ENCODE measurements at regions of chr2 and their contacts with region 1.

Region 1: DNA sequence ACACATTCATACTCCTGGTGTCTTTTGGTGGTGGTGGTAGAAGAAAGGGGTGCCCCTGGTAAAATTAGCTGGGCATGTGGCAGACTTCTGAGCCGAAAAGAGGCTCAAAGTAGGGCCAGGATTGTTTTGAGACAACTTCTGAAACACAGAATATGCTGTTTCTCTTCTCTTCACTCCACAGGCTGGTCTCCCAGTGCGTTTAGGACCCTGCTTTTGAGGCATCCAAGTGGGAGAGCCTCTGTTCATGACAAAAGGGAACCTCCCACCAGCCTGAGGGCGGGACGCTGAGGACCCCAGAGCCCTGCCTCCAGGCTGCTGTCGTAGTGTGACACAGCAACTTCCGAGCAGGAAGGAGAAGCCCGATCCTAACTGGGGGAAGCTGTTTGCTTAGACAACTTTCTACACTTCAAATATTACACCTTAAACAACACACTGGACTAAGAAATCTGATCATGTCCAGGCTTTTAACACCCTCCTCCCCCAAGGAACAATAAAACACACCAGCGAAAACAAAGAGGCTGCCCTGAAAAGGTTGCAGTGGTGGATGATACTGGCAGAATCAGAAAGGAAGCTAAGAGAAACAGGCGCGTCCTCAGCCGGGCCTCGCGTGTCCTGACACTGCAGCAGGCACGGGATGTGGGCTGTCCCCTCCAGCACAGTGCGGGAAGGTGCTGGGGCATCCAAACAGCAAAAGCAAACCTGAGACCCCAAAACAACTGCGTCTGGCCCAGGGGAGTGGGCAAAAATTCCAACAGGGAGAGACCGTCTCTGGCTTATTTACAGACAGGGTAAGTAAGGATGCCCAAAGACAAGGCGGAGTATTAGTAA is 9.3 kb downstream of the SERTAD2 start:
- DNase-seq: peak; percentile 72
- ATAC-seq: peak; percentile 73
- H3K4me3 Mint-ChIP-seq: peak overlapping the region; percentile 74
- H3K27ac Mint-ChIP-seq: peak overlapping the region; percentile 94
- H3K4me1 Mint-ChIP-seq: peaks cover 82% of the 10 kb centered on the region
- H3K27me3 Mint-ChIP-seq: no peaks in the 10 kb centered on the region

Region 2: GRCh38 chr2:64318476-64318748 is 326.0 kb before region 1 on chr2:
- CTCF ChIA-PET with region 1: no interaction called
- POLR2A ChIA-PET with region 1: no interaction called
- intact Hi-C with region 1: no loop called
- DNase-seq: no peak
- ATAC-seq: peak; percentile 85
- H3K4me3 Mint-ChIP-seq: no peak overlapping the region
- H3K27ac Mint-ChIP-seq: no peak overlapping the region
- H3K4me1 Mint-ChIP-seq: peaks cover 6% of the 10 kb centered on the region
- H3K27me3 Mint-ChIP-seq: peaks cover 2% of the 10 kb centered on the region

Region 3: DNA sequence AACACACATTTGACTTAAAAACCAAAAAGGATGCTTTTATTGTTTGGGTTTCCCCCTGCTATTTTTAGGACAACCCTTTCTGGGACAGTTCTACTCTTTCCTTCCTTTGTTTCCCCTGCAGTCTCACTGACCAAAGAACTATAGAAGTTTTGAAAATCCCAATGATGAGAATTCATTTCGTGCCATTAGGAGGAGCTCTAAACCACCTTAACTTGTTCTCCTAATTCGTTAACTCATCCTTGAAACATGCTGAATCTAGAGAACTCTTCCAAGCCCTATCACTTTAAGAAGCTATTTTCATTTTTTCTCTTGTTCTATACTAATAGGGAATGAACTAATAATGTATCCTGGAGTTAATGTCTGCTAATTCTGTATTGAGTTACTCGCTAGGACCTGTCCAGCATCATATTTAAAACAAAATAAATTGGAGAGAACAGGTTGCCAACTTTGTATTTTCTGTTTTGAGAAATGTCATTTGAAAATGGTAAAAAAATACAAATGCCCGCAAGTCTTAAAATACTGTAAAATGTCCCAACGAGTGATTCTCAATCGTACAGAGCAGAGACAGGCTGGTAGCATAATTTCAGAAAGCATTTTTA is 57.4 kb before region 1 on chr2:
- CTCF ChIA-PET with region 1: interaction called, 7 read pairs
- POLR2A ChIA-PET with region 1: no interaction called
- intact Hi-C with region 1: loop called in 1 of 2 experiments (anchors 5 kb)
- DNase-seq: no peak
- ATAC-seq: peak; percentile 44
- H3K4me3 Mint-ChIP-seq: no peak overlapping the region
- H3K27ac Mint-ChIP-seq: no peak overlapping the region
- H3K4me1 Mint-ChIP-seq: peaks cover 20% of the 10 kb centered on the region
- H3K27me3 Mint-ChIP-seq: no peaks in the 10 kb centered on the region

Region 4: GRCh38 chr2:64622443-64623241 is 21.7 kb before region 1 on chr2:
- CTCF ChIA-PET with region 1: interaction called, 14 read pairs
- POLR2A ChIA-PET with region 1: no interaction called
- intact Hi-C with region 1: no loop called
- DNase-seq: no peak
- ATAC-seq: no peak
- H3K4me3 Mint-ChIP-seq: no peak overlapping the region
- H3K27ac Mint-ChIP-seq: no peak overlapping the region
- H3K4me1 Mint-ChIP-seq: no peaks in the 10 kb centered on the region
- H3K27me3 Mint-ChIP-seq: no peaks in the 10 kb centered on the region

Region 5: GRCh38 chr2:64698668-64699444 is 54.5 kb after region 1 on chr2:
- CTCF ChIA-PET with region 1: interaction called, 5 read pairs
- POLR2A ChIA-PET with region 1: no interaction called
- intact Hi-C with region 1: loop called in 1 of 2 experiments (anchors 2 kb)
- DNase-seq: no peak
- ATAC-seq: peak; percentile 89
- H3K4me3 Mint-ChIP-seq: no peak overlapping the region
- H3K27ac Mint-ChIP-seq: peak overlapping the region; percentile 70
- H3K4me1 Mint-ChIP-seq: peaks cover 54% of the 10 kb centered on the region
- H3K27me3 Mint-ChIP-seq: no peaks in the 10 kb centered on the region

Region 6: DNA sequence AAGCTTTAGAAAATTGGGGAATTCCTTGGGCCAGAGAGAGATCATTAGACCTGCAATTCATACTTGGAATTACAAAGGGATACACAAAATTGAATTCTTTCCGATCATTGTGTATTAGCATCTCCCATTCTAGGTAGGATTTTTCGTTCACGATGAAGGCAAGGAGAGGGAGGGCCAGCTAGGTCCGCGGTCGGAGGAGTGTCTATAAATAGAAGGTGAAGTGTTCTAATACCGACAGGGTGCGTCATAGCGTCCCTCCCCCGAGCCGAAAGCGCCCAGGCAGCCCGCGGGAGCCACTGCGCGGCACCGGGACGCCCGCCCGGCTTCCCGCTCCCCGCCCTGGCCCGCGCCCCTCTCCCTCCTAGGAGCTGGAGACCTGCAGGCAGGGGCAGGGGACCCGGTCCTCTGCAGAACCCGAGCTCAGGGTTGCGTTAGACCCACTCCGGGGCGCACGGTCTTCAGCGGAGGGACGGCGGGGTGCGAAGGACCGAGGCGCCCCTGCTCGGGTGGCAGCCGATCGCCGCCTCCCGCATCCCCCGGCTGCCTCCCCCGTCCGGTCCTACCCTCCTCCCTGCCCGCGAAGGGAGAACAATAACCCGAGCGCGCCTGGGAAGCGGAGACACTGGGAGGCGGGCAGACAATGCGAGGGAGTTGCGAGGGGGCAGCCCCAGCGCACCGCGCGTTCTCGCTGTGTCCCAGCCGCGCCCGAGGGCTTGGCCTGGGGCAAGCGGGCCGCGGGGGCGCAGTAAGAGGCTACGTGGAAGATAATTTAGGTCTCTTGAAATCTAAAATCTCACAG is 123.5 kb after region 1 on chr2:
- CTCF ChIA-PET with region 1: interaction called, 7 read pairs
- POLR2A ChIA-PET with region 1: no interaction called
- intact Hi-C with region 1: loop called in 1 of 2 experiments (anchors 5 kb)
- DNase-seq: peak; percentile 86
- ATAC-seq: peak; percentile 84
- H3K4me3 Mint-ChIP-seq: peak overlapping the region; percentile 71
- H3K27ac Mint-ChIP-seq: peak overlapping the region; percentile 80
- H3K4me1 Mint-ChIP-seq: peaks cover 25% of the 10 kb centered on the region
- H3K27me3 Mint-ChIP-seq: peaks cover 2% of the 10 kb centered on the region

Region 7: GRCh38 chr2:64859312-64860212 is 215.2 kb after region 1 on chr2:
- CTCF ChIA-PET with region 1: interaction called, 10 read pairs
- POLR2A ChIA-PET with region 1: interaction called, 4 read pairs
- intact Hi-C with region 1: no loop called
- DNase-seq: peak; percentile 23
- ATAC-seq: no peak
- H3K4me3 Mint-ChIP-seq: no peak overlapping the region
- H3K27ac Mint-ChIP-seq: no peak overlapping the region
- H3K4me1 Mint-ChIP-seq: peaks cover 4% of the 10 kb centered on the region
- H3K27me3 Mint-ChIP-seq: peaks cover 8% of the 10 kb centered on the region

Region 8: DNA sequence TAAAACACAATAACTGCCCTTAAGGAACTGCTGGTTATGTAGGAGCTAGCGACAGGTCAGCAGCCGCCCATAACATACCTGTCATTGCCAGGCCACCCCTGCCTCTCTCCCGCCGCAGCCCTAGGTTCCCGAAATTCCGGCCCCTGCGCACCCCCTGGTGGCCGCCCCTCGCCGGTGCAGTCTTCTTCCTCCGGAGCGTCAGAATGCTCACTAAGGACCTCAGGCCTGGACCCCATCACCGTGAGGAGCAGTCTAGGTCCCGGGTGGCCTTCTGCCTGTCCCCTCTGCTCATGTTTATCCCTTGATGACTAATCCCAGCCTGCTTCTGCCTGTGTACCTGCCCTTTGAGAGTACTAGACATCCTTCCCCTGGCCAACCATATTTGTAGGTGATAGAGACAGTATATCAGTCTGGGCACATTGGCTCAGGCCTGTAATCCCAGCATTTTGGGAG is 229.1 kb after region 1 on chr2:
- CTCF ChIA-PET with region 1: interaction called, 16 read pairs
- POLR2A ChIA-PET with region 1: no interaction called
- intact Hi-C with region 1: loop called in 1 of 2 experiments (anchors 2 kb)
- DNase-seq: peak; percentile 89
- ATAC-seq: peak; percentile 93
- H3K4me3 Mint-ChIP-seq: no peak overlapping the region
- H3K27ac Mint-ChIP-seq: no peak overlapping the region
- H3K4me1 Mint-ChIP-seq: peaks cover 3% of the 10 kb centered on the region
- H3K27me3 Mint-ChIP-seq: no peaks in the 10 kb centered on the region